ENCODE measurements at regions of chr5 and their contacts with region 1.

Region 1: DNA sequence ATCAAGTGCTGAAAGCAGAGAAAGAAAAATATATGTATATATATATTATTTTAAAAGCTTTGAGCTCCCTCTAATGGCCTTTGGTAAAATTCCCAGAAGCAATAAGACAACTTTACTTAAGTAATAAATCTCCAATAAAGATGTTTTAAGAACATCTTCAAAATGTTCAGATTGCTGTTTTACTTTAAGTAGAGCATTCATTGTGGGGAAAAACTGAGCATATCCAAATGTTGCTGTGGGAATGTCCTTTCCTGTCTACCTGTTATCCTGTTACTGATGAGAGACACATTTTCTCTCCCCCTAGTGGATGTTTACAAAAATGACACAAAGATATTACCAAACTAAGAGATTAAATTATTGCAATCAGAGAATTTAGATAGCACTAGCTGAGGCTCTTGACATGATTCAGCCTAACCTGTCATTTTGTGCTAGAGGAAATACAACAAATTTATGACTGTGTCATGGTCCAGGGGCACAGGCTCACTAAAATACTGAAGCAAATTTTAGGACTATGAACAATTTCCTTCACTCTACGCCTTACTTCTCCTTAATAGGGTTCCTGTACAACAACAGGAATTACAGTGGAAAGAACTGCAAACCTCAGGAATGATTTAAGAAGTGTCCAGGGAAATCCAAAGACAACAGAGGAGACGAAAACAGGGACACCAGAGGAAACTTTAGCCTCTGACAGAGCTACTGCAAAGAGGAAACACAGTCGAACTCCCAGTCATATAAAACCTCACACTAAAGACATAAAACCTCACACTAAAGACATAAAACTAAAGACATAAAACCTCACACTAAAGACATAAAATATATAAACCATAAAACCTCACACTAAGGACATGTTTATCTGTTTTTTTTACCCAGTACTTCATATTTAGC is 24.3 kb upstream of the PRRC1 start:
- H3K4me3 ChIP-seq: no peak overlapping the region
- H3K27ac ChIP-seq: no peak overlapping the region
- H3K4me1 ChIP-seq: no peaks in the 10 kb centered on the region
- CTCF ChIP-seq: peak; percentile 71

Region 2: DNA sequence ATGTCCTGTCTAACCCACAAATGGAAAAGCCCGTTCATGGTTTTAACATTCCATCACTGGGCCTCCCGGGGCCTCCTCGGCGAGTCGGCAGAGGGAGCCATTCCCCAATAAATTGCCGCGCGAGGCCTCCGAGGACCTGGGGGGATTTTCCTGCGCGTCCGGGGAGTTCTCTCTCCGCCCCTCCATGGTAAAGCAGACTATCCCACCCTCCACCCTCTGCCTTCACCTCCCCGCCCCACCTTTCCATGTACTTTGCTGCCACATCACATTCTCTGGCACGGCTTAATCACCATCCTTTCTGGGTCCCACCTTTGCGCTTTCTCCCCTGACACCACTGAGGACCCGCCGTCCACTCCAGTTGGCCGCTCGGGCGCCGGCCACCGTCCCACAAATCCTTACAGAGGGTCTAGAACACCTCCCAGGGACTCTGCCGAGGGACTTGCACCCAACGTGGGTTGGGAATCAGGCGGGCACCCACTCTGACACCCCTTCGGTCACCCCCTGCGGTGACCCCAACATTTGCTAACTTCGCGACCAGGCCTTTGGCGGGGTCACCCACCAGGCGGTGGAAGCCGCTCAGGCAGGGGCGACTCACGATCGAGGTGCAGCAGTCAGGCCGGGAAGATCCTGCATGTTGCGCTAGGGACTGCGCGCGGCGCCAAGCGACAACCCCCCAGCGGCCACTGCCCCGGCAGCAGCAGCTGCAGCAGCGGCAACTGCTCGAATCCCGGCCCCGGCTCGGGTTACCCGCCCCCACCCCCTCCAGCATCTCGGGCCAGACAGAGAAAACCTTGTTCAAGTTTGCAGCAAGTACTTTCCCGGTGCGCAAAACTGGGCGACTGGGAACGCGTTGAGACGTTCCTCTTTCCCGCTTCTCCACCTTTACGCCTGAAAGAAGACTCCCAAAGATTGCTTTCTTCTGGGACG is 202.8 kb before region 1 on chr5 and contains the start of gene MEGF10:
- CTCF ChIA-PET with region 1: interaction called, 17 read pairs
- POLR2A ChIA-PET with region 1: no interaction called
- H3K4me3 ChIP-seq: peak within 1 kb of the TSS; percentile 61
- H3K27ac ChIP-seq: peak within 1 kb of the TSS; percentile 50; the same call in 1 of the 2 replicates
- H3K4me1 ChIP-seq: no peaks in the 10 kb centered on the region
- CTCF ChIP-seq: peak; percentile 78

Region 3: GRCh38 chr5:127373858-127374491 is 119.1 kb before region 1 on chr5:
- CTCF ChIA-PET with region 1: no interaction called
- POLR2A ChIA-PET with region 1: no interaction called
- H3K4me3 ChIP-seq: no peak overlapping the region
- H3K27ac ChIP-seq: no peak overlapping the region
- H3K4me1 ChIP-seq: no peaks in the 10 kb centered on the region
- CTCF ChIP-seq: no peak

Region 4: GRCh38 chr5:127423173-127423798 is 69.8 kb before region 1 on chr5:
- CTCF ChIA-PET with region 1: no interaction called
- POLR2A ChIA-PET with region 1: no interaction called
- H3K4me3 ChIP-seq: no peak overlapping the region
- H3K27ac ChIP-seq: no peak overlapping the region
- H3K4me1 ChIP-seq: no peaks in the 10 kb centered on the region
- CTCF ChIP-seq: no peak

Region 5: GRCh38 chr5:127472686-127473085 is 20.4 kb before region 1 on chr5:
- CTCF ChIA-PET with region 1: interaction called, 11 read pairs
- POLR2A ChIA-PET with region 1: no interaction called
- H3K4me3 ChIP-seq: no peak overlapping the region
- H3K27ac ChIP-seq: no peak overlapping the region
- H3K4me1 ChIP-seq: no peaks in the 10 kb centered on the region
- CTCF ChIP-seq: no peak

Region 6: GRCh38 chr5:127505905-127506304 is 12.8 kb after region 1 on chr5:
- CTCF ChIA-PET with region 1: interaction called, 13 read pairs
- POLR2A ChIA-PET with region 1: no interaction called
- H3K4me3 ChIP-seq: no peak overlapping the region
- H3K27ac ChIP-seq: no peak overlapping the region
- H3K4me1 ChIP-seq: no peaks in the 10 kb centered on the region
- CTCF ChIP-seq: no peak